Activated B cell treated with CpG ODN at 0.5 μM for 24 hours (primary cell): ENCODE measurements at regions of chr16 and their contacts with region 1.

Region 1: DNA sequence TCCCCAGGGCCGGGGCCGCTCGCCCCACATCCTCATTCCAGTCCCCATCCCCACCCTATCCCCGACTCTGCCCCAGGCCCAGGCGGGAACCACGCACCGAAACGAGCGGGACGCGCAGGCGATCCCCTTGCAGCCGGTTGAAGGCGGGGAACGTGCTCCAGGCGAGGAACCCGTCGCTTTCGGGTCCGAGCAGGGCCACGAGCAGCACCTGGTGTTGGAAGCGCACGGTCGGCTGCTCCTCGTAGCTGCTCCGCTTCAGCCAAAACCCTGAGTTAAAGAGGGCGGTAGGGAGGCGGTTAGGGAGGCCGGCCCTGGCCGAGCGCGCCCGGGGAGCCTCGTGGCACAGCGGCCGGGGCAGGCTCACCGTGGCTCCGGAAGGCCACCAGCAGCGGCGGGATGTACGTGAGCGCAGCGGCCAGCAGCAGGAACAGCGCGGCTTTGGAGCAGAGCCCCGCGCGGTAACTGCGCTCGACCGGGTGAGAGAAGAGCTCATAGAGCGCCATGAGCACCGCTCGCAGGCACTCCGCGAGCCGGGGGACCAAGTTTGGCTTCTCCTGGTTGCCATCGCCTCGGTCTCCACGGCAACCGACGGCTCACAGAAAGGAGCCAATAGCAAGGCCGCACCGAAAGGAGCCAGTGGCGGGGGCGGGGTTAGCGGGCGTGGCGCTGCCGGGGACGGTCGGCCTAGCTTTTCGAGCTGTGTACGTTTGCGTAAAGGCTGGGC is at the start of gene TMEM231:
- DNase-seq: peak; percentile 89
- ATAC-seq: peak; percentile 94
- H3K4me3 Mint-ChIP-seq: peak within 1 kb of the TSS; percentile 93
- H3K27ac Mint-ChIP-seq: peak within 1 kb of the TSS; percentile 89
- H3K4me1 Mint-ChIP-seq: peaks cover 10% of the 10 kb centered on the region
- H3K27me3 Mint-ChIP-seq: no peaks in the 10 kb centered on the region
- CTCF ChIP-seq: no peak
- total RNA-seq, gene TMEM231: 4.0 and 4.1 TPM in 2 replicates

Region 2: GRCh38 chr16:74666425-74667254 is 889.2 kb before region 1 on chr16 and contains the start of gene RFWD3:
- CTCF ChIA-PET with region 1: no interaction called
- POLR2A ChIA-PET with region 1: no interaction called
- intact Hi-C with region 1: loop called (anchors 5 kb)
- DNase-seq: peak; percentile 78
- ATAC-seq: peak; percentile 99
- H3K4me3 Mint-ChIP-seq: peak within 1 kb of the TSS; percentile 94
- H3K27ac Mint-ChIP-seq: peak within 1 kb of the TSS; percentile 90
- H3K4me1 Mint-ChIP-seq: peaks cover 38% of the 10 kb centered on the region
- H3K27me3 Mint-ChIP-seq: no peaks in the 10 kb centered on the region
- CTCF ChIP-seq: no peak
- total RNA-seq, gene RFWD3: 57.9 and 63.2 TPM in 2 replicates

Region 3: GRCh38 chr16:75238132-75238852 is 317.6 kb before region 1 on chr16:
- CTCF ChIA-PET with region 1: no interaction called
- POLR2A ChIA-PET with region 1: no interaction called
- intact Hi-C with region 1: loop called (anchors 10 kb)
- DNase-seq: no peak
- ATAC-seq: no peak
- H3K4me3 Mint-ChIP-seq: no peak overlapping the region
- H3K27ac Mint-ChIP-seq: no peak overlapping the region
- H3K4me1 Mint-ChIP-seq: peaks cover 2% of the 10 kb centered on the region
- H3K27me3 Mint-ChIP-seq: peaks cover 47% of the 10 kb centered on the region
- CTCF ChIP-seq: no peak

Region 4: GRCh38 chr16:75488322-75488721 is 67.5 kb before region 1 on chr16:
- CTCF ChIA-PET with region 1: no interaction called
- POLR2A ChIA-PET with region 1: no interaction called
- intact Hi-C with region 1: no loop called
- DNase-seq: no peak
- ATAC-seq: no peak
- H3K4me3 Mint-ChIP-seq: no peak overlapping the region
- H3K27ac Mint-ChIP-seq: no peak overlapping the region
- H3K4me1 Mint-ChIP-seq: peaks cover 35% of the 10 kb centered on the region
- H3K27me3 Mint-ChIP-seq: no peaks in the 10 kb centered on the region
- CTCF ChIP-seq: no peak

Region 5: GRCh38 chr16:75519881-75520280 is 36.0 kb before region 1 on chr16:
- CTCF ChIA-PET with region 1: interaction called, 10 read pairs
- POLR2A ChIA-PET with region 1: interaction called, 12 read pairs
- intact Hi-C with region 1: loop called (anchors 1 kb)
- DNase-seq: no peak
- ATAC-seq: no peak
- H3K4me3 Mint-ChIP-seq: no peak overlapping the region
- H3K27ac Mint-ChIP-seq: no peak overlapping the region
- H3K4me1 Mint-ChIP-seq: peaks cover 13% of the 10 kb centered on the region
- H3K27me3 Mint-ChIP-seq: no peaks in the 10 kb centered on the region
- CTCF ChIP-seq: no peak

Region 6: GRCh38 chr16:75584108-75584507 is 28.2 kb after region 1 on chr16:
- CTCF ChIA-PET with region 1: interaction called, 4 read pairs
- POLR2A ChIA-PET with region 1: no interaction called
- intact Hi-C with region 1: loop called (anchors 1 kb)
- DNase-seq: no peak
- ATAC-seq: peak; percentile 91
- H3K4me3 Mint-ChIP-seq: peak overlapping the region; percentile 19
- H3K27ac Mint-ChIP-seq: peak overlapping the region; percentile 65
- H3K4me1 Mint-ChIP-seq: peaks cover 54% of the 10 kb centered on the region
- H3K27me3 Mint-ChIP-seq: no peaks in the 10 kb centered on the region
- CTCF ChIP-seq: no peak

Region 7: DNA sequence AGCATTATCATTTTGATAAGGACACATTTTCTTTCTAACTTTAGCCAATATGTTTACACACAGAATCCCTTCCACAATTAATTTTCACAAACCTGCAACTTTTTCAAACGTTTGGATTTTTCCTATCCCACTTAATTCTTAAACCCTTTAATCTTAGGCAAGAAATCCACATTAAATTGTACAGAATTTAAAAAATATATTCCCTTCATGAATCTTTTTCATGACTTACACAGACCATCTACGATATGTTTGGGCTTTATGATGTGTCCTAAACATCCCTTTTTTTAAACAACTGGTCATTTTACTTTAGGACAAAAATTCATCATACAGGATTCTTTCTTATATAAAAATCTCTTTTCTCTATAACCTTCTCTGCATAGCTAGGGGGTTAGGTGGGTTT is 479.8 kb after region 1 on chr16:
- CTCF ChIA-PET with region 1: no interaction called
- POLR2A ChIA-PET with region 1: no interaction called
- intact Hi-C with region 1: no loop called
- DNase-seq: no peak
- ATAC-seq: no peak
- H3K4me3 Mint-ChIP-seq: no peak overlapping the region
- H3K27ac Mint-ChIP-seq: no peak overlapping the region
- H3K4me1 Mint-ChIP-seq: no peaks in the 10 kb centered on the region
- H3K27me3 Mint-ChIP-seq: no peaks in the 10 kb centered on the region
- CTCF ChIP-seq: no peak